Activated CD8-positive, alpha-beta T cell treated with anti-CD3 and anti-CD28 coated beads for 36 hours (primary cell): ENCODE measurements at regions of chr7 and their contacts with region 1.

Region 1: GRCh38 chr7:100456558-100456957 is 7.5 kb downstream of the SPACDR start:
- DNase-seq: no peak
- ATAC-seq: no peak
- H3K4me3 Mint-ChIP-seq: no peak overlapping the region
- H3K27ac Mint-ChIP-seq: no peak overlapping the region
- H3K4me1 Mint-ChIP-seq: peaks cover 14% of the 10 kb centered on the region
- H3K27me3 Mint-ChIP-seq: no peaks in the 10 kb centered on the region
- CTCF ChIP-seq: no peak

Region 2: GRCh38 chr7:100435401-100436304 is 20.9 kb before region 1 on chr7:
- CTCF ChIA-PET with region 1: no interaction called
- POLR2A ChIA-PET with region 1: interaction called, 12 read pairs
- intact Hi-C with region 1: no loop called
- DNase-seq: peak; percentile 58
- ATAC-seq: peak; percentile 15
- H3K4me3 Mint-ChIP-seq: peak overlapping the region; percentile 92
- H3K27ac Mint-ChIP-seq: peak overlapping the region; percentile 97
- H3K4me1 Mint-ChIP-seq: peaks cover 37% of the 10 kb centered on the region
- H3K27me3 Mint-ChIP-seq: no peaks in the 10 kb centered on the region
- CTCF ChIP-seq: no peak

Region 3: DNA sequence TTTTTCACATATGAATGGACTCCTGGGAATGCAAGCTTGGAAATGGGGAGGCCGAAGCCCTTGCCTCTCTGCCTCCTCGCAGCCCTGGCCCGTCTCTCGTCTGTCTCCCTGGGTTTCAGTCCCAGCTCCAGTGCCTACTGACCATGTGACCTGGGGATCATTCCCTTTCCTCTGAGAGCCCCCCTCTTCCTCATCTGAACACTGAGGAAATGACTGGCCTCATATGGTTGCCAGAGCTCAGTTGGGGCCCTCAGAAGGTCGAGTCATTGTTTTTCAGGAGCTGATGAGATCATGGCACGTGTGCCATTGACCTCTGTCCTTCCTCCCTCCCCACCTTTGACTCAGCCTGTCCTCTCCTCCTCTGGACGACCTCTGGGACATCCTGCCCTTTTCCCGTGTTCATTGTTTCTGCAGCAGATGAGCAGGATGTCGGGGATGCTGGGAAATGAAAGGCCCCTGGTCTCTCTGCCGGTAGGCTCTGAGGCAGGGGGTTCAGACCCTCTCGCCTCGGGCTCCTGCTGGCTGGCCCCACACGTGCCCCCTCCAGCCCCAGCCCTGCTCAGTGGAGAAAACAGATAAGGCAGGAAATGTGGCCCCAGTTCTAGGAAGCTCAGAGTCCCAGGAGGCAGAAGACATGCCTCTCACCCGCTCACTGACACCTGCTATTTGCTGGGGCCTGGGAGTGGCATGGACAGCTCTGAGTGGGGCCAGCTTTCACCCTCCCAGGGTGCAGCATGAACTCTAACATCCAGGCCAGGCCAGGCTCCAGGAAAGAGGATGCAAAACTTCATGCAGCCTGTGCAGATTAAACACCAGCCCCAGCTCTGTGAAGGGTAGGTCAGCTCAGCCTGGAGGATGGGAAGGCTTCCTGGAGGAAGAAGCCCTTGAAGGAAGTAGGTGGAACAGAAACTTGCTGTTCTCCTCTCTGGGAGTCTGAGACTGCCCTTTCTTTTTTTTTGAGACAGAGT is 12.0 kb before region 1 on chr7:
- CTCF ChIA-PET with region 1: interaction called, 17 read pairs
- POLR2A ChIA-PET with region 1: interaction called, 4 read pairs
- intact Hi-C with region 1: no loop called
- DNase-seq: peak; percentile 53
- ATAC-seq: peak; percentile 80
- H3K4me3 Mint-ChIP-seq: peak overlapping the region; percentile 31
- H3K27ac Mint-ChIP-seq: peak overlapping the region; percentile 82
- H3K4me1 Mint-ChIP-seq: peaks cover 16% of the 10 kb centered on the region
- H3K27me3 Mint-ChIP-seq: no peaks in the 10 kb centered on the region
- CTCF ChIP-seq: no peak

Region 4: GRCh38 chr7:100469227-100470044 is 12.9 kb after region 1 on chr7:
- CTCF ChIA-PET with region 1: interaction called, 20 read pairs
- POLR2A ChIA-PET with region 1: no interaction called
- intact Hi-C with region 1: loop called (anchors 2 kb)
- DNase-seq: peak; percentile 87
- ATAC-seq: peak; percentile 89
- H3K4me3 Mint-ChIP-seq: no peak overlapping the region
- H3K27ac Mint-ChIP-seq: peak overlapping the region; percentile 57
- H3K4me1 Mint-ChIP-seq: peaks cover 33% of the 10 kb centered on the region
- H3K27me3 Mint-ChIP-seq: no peaks in the 10 kb centered on the region
- CTCF ChIP-seq: peak; percentile 82

Region 5: DNA sequence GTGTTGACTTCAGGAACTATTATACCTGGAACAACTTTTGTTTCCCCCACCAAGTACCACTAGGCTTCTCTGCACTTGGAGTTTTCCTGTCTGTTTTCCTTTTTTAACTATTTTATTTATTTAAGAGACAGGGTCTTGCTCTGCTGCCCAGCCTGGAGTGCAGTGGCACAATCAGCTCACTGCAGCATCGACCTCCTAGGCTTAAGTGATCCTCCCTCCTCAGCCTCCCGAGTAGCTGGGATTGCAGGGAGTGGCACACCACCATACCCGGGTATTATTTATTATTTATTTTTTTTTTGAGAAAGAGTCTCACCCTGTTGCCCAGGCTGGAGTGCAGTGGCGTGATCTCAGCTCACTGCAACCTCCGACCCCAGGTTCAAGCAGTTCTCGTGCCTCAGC is 239.6 kb after region 1 on chr7:
- CTCF ChIA-PET with region 1: no interaction called
- POLR2A ChIA-PET with region 1: no interaction called
- intact Hi-C with region 1: no loop called
- DNase-seq: no peak
- ATAC-seq: no peak
- H3K4me3 Mint-ChIP-seq: peak overlapping the region; percentile 62
- H3K27ac Mint-ChIP-seq: peak overlapping the region; percentile 73
- H3K4me1 Mint-ChIP-seq: peaks cover 30% of the 10 kb centered on the region
- H3K27me3 Mint-ChIP-seq: peaks cover 1% of the 10 kb centered on the region
- CTCF ChIP-seq: no peak